Activated CD8-positive, alpha-beta T cell treated with anti-CD3 and anti-CD28 coated beads for 36 hours (primary cell): ENCODE measurements at regions of chr9 and their contacts with region 1.

Region 1: DNA sequence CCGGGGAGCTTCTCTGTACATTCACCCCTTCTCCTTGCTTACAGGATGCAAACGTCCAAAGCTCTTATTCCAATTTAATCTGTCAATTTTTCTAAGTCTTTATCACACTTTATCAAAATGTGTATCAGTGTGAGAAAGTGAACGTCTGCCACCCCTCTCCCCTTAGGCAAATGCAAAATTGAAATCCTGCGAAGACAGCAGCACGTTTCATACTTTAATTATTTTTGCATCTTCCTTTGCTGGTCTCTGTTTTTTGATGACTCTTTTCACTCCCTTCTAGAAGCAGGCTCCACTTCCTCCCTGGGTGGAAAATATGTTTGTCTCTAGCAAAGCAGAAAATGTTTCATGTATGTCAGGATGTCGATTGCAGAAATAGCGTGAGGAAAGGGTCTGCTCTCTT is 576.5 kb upstream of the BRINP1 start:
- DNase-seq: no peak
- ATAC-seq: no peak
- H3K4me3 Mint-ChIP-seq: no peak overlapping the region
- H3K27ac Mint-ChIP-seq: no peak overlapping the region
- H3K4me1 Mint-ChIP-seq: no peaks in the 10 kb centered on the region
- H3K27me3 Mint-ChIP-seq: no peaks in the 10 kb centered on the region
- CTCF ChIP-seq: no peak

Region 2: DNA sequence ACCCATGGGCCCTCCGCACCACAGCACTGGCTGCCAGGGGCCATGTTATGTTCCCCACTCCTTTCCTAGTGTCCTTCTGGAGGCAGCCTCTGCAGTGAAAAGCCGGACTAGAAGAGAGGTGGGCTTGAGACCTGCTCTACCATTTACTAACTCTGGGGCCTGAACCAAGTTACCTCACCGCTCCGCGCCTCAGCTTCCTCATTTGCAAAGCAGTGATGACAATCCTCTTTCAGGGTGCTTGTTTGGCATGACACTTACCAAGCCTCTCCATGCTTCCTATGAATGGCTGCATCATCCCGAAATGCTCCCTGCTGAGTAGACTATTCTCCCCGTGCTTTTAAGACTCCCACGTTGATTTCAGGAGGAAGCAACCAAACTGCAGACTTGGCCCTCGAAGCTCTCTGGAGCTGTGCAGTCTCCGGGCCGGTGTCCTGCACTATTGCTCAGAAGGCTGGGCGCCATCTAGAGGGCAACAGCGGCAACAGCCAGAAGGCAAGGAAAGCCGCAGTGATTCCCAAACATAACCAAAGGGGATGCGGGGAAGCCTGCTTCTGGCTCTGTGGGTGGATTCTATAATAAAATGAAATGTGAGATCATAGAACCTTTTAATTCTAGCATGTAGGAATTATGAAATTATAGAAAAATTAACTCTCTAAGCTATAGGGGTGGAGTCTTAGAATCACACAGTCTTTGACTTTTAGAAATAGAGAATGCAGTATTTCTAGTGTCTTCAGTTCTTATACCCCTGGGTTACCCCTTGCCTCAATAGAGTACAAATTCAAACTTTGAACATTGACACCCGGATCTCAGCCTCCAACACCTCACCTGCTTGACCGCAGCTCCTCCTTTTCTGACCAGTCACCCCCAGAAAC is 23.4 kb after region 1 on chr9:
- CTCF ChIA-PET with region 1: interaction called, 18 read pairs
- POLR2A ChIA-PET with region 1: no interaction called
- intact Hi-C with region 1: no loop called
- DNase-seq: peak; percentile 61
- ATAC-seq: peak; percentile 58
- H3K4me3 Mint-ChIP-seq: no peak overlapping the region
- H3K27ac Mint-ChIP-seq: no peak overlapping the region
- H3K4me1 Mint-ChIP-seq: peaks cover 2% of the 10 kb centered on the region
- H3K27me3 Mint-ChIP-seq: peaks cover 13% of the 10 kb centered on the region
- CTCF ChIP-seq: peak; percentile 82